Activated CD4-positive, alpha-beta memory T cell treated with anti-CD3 and anti-CD28 coated beads, Interleukin-2, amount 10 ng/mL, durations not matched to agents 7 days and 5 days (primary cell): ENCODE measurements at regions of chr4 and their contacts with region 1.

Region 1: DNA sequence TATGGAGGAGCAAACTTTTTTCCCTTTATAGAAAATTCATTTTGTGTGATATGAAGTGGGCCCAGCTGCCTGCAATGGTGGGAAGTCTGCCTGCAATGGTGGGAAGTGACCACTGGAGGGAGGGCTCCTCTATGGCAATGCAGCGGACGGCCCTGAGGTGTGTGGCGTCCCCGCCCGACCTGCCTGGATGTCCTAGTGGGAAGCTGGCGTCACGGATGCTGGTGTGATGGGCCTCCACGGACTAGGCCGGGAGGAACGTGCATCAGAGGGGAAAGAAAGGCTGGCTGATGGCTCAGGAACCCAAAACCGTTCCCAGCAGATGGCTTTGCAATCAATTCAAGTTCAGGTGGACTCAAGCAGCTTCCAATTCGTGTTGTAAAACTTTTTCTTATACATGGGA is 177.9 kb downstream of the AFAP1 start:
- DNase-seq: peak; percentile 52
- H3K4me3 Mint-ChIP-seq: no peak overlapping the region
- H3K27ac Mint-ChIP-seq: peak overlapping the region; percentile 65
- H3K4me1 Mint-ChIP-seq: peaks cover 36% of the 10 kb centered on the region
- H3K27me3 Mint-ChIP-seq: no peaks in the 10 kb centered on the region

Region 2: DNA sequence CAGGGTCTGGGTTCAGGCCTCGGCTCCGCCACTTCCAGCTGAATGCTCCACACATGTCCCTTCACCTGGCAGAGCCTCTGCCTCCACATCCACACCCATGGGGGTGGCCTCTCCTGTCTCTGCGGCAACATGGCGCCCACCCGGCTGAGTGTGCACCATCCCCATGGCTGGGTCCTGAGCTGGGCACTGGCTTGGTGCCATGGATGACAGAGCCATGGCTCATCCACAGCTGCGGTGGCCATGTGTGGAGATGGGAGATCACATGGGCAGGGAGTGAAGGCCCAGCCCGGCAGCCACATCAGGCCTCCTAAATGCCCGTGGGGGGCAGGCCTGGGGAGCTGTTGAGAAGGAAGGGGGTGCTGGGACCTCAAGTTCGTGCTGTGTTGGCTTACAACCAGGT is 35.8 kb before region 1 on chr4:
- CTCF ChIA-PET with region 1: no interaction called
- POLR2A ChIA-PET with region 1: no interaction called
- DNase-seq: no peak
- H3K4me3 Mint-ChIP-seq: no peak overlapping the region
- H3K27ac Mint-ChIP-seq: no peak overlapping the region
- H3K4me1 Mint-ChIP-seq: no peaks in the 10 kb centered on the region
- H3K27me3 Mint-ChIP-seq: no peaks in the 10 kb centered on the region

Region 3: DNA sequence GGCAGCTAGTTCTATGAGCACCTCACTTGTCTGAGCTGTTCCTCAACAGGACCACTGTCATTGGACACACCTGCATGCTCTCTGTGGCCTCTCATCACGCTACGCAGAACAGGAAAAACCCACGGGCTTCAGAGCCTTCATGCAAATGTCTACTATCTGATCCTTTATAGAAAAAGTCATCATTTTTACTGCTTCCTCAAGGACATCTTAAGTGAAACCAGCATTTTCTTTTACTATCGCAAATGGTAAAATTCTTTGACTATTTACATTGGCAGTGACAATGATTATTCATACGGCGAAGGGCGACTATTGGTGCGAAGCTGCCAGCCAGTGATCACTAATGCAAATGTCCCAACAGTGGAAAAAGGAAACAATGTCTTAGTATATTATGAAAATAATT is 30.9 kb after region 1 on chr4:
- CTCF ChIA-PET with region 1: interaction called, 10 read pairs
- POLR2A ChIA-PET with region 1: no interaction called
- DNase-seq: no peak
- H3K4me3 Mint-ChIP-seq: no peak overlapping the region
- H3K27ac Mint-ChIP-seq: no peak overlapping the region
- H3K4me1 Mint-ChIP-seq: no peaks in the 10 kb centered on the region
- H3K27me3 Mint-ChIP-seq: no peaks in the 10 kb centered on the region